Vagina (tissue), 2 donors: ENCODE measurements at regions of chr17 and their contacts with region 1.

Region 1: DNA sequence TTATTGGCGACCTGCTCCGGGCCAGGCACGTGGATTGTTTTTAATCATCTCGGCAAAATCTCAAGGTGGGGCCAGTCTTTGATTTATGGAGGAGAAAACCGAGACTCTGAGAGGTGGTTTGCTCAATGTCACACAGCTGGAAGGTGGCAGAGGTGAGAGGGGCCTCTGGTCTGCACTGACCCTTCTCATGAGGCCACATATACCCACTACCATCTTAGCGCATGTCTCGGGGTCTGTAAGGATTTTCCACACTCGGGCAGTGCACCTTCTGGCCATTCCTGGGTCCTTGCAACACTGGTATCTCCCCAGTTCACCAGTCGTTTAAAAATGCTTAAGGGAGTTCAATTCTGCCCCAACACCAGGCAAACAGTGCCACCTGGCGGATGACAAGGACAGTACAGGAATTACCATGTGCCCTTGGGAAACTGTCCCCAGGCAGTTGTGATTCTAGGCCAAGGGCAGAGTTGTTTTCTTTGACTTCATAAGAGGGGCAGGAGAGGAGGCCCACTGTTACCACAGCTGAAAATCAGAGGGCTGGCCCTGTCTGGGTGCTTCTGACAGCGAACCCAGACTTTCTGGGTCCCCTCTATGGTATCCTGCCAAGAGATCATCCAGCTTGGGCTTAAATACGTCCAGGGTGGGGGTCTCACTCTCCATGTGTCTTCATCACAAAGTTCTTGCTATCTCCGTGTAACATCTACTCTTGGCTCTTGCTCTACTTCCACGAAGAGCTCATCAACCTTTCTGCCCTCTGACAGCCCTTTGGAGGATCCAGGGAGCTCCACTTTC is 39.4 kb upstream of the RAI1 start:
- DNase-seq: no peak
- H3K4me3 ChIP-seq: no peak overlapping the region
- H3K27ac ChIP-seq: no peak overlapping the region
- H3K4me1 ChIP-seq: no peaks in the 10 kb centered on the region
- H3K27me3 ChIP-seq: no peaks in the 10 kb centered on the region
- CTCF ChIP-seq: peak; percentile 79 to 98 (median 97)
- POLR2A ChIP-seq: no peak

Region 2: GRCh38 chr17:17356149-17356930 is 285.5 kb before region 1 on chr17:
- intact Hi-C with region 1: loop called (anchors 2 kb)
- DNase-seq: no peak
- H3K4me3 ChIP-seq: no peak overlapping the region
- H3K27ac ChIP-seq: no peak overlapping the region
- H3K4me1 ChIP-seq: peaks cover 12% of the 10 kb centered on the region
- H3K27me3 ChIP-seq: no peaks in the 10 kb centered on the region
- CTCF ChIP-seq: peak; percentile 91 to 100 (median 96)
- POLR2A ChIP-seq: no peak